HepG2 (cell line): ENCODE measurements at regions of chr5 and their contacts with region 1.

Region 1: DNA sequence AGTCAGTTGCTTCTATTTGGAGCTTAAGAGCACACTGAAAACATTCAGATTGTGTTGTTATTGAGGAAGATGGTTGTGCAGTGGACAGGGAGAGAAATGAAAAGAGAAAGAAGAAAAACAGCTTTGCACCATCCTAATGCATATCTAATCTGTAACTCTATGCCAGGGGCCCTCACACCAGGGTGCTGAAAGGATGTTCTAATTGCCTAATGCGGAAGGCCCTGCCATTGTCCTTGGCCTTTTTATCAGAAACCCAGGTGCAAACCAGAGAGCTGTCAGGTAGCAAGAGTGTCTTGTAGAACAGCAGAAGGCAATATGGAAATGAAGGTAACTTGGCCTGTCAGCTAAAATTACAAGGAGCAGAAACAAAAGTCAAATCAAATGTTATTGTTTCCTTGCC is 384.5 kb upstream of the PIK3R1 start:
- DNase-seq: no peak
- ATAC-seq: no peak
- H3K4me3 ChIP-seq: no peak overlapping the region
- H3K27ac ChIP-seq: no peak overlapping the region
- H3K4me1 ChIP-seq: peaks cover 7% of the 10 kb centered on the region; the same call in 1 of the 2 replicates
- H3K27me3 ChIP-seq: no peaks in the 10 kb centered on the region
- CTCF ChIP-seq: no peak
- EP300 ChIP-seq: no peak
- POLR2A ChIP-seq: no peak
- RAD21 ChIP-seq: no peak

Region 2: DNA sequence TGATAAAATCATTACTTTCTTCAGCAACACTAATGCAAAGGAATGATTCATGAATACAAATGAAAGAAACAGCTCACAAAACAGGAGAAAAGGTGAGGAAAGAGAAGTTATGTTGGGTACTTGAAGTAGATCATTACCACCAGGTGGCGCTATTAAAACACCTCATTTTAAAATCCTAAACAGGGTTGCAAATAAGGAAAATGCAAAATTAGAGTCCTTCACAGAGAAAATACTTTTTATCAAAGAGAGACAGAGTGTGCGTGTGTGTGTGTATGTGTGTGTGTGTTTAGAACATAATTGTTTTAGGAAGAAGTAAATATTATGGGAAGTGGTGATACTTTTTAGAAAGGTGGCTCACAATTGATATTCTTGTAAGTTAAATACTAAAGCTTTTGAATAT is 584.9 kb before region 1 on chr5:
- CTCF ChIA-PET with region 1: no interaction called
- POLR2A ChIA-PET with region 1: no interaction called
- in situ Hi-C with region 1: no loop called
- intact Hi-C with region 1: loop called (anchors 5 kb)
- DNase-seq: peak; percentile 49
- ATAC-seq: no peak; the same call in 2 of the 3 replicates
- H3K4me3 ChIP-seq: no peak overlapping the region
- H3K27ac ChIP-seq: no peak overlapping the region
- H3K4me1 ChIP-seq: peaks cover 13% of the 10 kb centered on the region
- H3K27me3 ChIP-seq: no peaks in the 10 kb centered on the region
- CTCF ChIP-seq: peak; percentile 71
- EP300 ChIP-seq: no peak
- POLR2A ChIP-seq: no peak
- RAD21 ChIP-seq: peak; percentile 65; the same call in 1 of the 2 replicates

Region 3: GRCh38 chr5:67842806-67843205 is 11.8 kb after region 1 on chr5:
- CTCF ChIA-PET with region 1: no interaction called
- POLR2A ChIA-PET with region 1: no interaction called
- in situ Hi-C with region 1: no loop called
- intact Hi-C with region 1: loop called (anchors 1 kb)
- DNase-seq: no peak
- ATAC-seq: peak; percentile 56; the same call in 2 of the 3 replicates
- H3K4me3 ChIP-seq: no peak overlapping the region
- H3K27ac ChIP-seq: no peak overlapping the region
- H3K4me1 ChIP-seq: no peaks in the 10 kb centered on the region
- H3K27me3 ChIP-seq: no peaks in the 10 kb centered on the region
- CTCF ChIP-seq: no peak
- EP300 ChIP-seq: no peak
- POLR2A ChIP-seq: no peak
- RAD21 ChIP-seq: no peak